ENCODE measurements at regions of chrX and their contacts with region 1.

Region 1: GRCh38 chrX:130975947-130976346 is 72.9 kb upstream of the ENOX2 start:
- DNase-seq: peak; percentile 48
- ATAC-seq: peak; percentile 80
- H3K4me3 ChIP-seq: no peak overlapping the region
- H3K27ac ChIP-seq: no peak overlapping the region
- H3K4me1 ChIP-seq: no peaks in the 10 kb centered on the region
- H3K27me3 ChIP-seq: peaks cover 3% of the 10 kb centered on the region
- CTCF ChIP-seq: peak; percentile 58
- POLR2A ChIP-seq: no peak
- RAD21 ChIP-seq: peak; percentile 53

Region 2: GRCh38 chrX:130952266-130953043 is 23.5 kb before region 1 on chrX:
- CTCF ChIA-PET with region 1: interaction called, 3 read pairs
- POLR2A ChIA-PET with region 1: no interaction called
- dilution Hi-C with region 1: no loop called
- in situ Hi-C with region 1: no loop called
- intact Hi-C with region 1: loop called (anchors 1 kb)
- DNase-seq: no peak
- ATAC-seq: no peak
- H3K4me3 ChIP-seq: no peak overlapping the region
- H3K27ac ChIP-seq: no peak overlapping the region
- H3K4me1 ChIP-seq: no peaks in the 10 kb centered on the region
- H3K27me3 ChIP-seq: peaks cover 4% of the 10 kb centered on the region
- CTCF ChIP-seq: no peak
- POLR2A ChIP-seq: no peak
- RAD21 ChIP-seq: no peak

Region 3: DNA sequence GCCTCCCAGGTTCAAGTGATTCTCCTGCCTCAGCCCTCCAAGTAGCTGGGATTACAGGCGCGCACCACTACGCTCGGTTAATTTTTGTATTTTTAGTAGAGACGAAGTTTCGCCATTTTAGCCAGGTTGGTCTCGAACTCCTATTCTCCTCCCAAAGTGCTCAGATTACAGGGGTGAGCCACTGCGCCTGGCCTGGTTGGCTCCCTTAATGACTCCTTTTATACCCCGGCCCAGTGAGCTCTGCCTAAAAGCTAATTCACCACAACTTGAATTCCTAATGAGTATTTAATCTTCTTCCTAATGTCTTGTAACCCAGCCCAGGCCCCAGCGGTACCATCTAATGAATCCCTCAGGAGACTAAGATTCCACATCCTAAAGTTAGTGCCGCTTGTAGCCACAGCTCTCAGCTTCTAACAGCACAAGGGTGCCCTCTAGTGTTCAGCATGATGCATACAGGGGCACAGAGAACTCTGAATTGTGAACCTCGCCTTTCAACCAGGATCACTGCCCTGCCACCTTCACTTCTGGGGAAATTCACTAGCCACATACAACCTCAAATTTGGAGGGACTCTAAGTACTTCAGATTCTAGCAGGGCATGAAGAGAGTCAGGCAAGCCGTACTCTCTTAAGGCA is 657.5 kb after region 1 on chrX:
- CTCF ChIA-PET with region 1: no interaction called
- POLR2A ChIA-PET with region 1: no interaction called
- dilution Hi-C with region 1: no loop called
- in situ Hi-C with region 1: loop called (anchors 10 kb)
- intact Hi-C with region 1: loop called (anchors 1 kb)
- DNase-seq: peak; percentile 41
- ATAC-seq: peak; percentile 94
- H3K4me3 ChIP-seq: no peak overlapping the region
- H3K27ac ChIP-seq: no peak overlapping the region
- H3K4me1 ChIP-seq: no peaks in the 10 kb centered on the region
- H3K27me3 ChIP-seq: no peaks in the 10 kb centered on the region; the same call in 1 of the 2 replicates
- CTCF ChIP-seq: peak; percentile 71
- POLR2A ChIP-seq: no peak
- RAD21 ChIP-seq: peak; percentile 72

Region 4: DNA sequence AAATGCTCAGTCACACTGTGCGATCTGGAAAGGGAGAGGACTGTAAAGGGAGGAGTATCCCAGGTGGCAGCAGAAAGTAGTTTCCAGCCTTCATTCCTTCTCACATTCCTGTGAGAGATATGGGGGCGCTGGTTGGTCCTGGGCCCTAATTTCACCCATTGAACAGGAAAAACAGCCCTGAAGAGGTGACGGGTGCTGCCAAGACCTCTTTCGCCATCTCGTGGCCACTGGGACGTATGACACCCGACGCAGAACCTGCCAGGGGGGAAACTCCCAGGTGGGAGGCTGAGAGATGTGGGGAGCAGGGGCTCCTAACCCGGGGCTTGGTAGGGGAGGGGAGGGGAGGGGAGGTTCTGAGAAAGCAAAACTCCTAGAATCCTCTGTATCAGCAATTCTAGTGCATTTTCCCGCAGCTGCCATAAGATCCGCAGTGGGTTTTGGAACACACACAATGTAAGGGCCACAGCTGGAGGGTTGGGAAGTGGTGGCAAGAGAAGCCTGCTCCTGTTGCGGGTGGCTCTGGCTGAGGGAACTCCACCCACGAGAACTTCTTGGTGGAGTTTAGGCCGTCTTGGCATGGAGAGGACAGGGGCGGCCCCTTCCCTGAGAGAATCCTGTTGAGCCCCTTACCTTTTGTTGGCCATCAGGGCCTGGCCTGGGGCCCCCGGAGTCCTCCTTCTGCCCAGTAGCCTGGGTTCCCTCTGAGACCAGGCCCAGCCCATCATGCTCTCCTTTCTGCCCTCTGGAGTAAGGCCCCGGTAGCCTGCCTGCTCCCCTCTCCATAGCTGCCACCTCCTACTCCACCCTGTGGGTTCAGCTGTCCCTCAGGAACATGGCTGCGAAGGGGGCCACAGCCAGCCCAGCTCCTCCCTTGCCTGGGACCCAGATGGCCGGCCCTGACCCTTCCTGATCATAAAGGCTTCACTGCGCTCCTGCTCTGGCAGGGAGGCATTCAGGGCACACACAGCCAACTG is 702.0 kb after region 1 on chrX:
- CTCF ChIA-PET with region 1: no interaction called
- POLR2A ChIA-PET with region 1: no interaction called
- dilution Hi-C with region 1: no loop called
- in situ Hi-C with region 1: no loop called
- intact Hi-C with region 1: loop called (anchors 5 kb)
- DNase-seq: peak; percentile 3
- ATAC-seq: peak; percentile 76
- H3K4me3 ChIP-seq: no peak overlapping the region
- H3K27ac ChIP-seq: no peak overlapping the region
- H3K4me1 ChIP-seq: no peaks in the 10 kb centered on the region
- H3K27me3 ChIP-seq: peaks cover 6% of the 10 kb centered on the region
- CTCF ChIP-seq: peak; percentile 50
- POLR2A ChIP-seq: no peak
- RAD21 ChIP-seq: peak; percentile 45